ENCODE measurements at regions of chr11 and their contacts with region 1.

Region 1: GRCh38 chr11:71448257-71449171 is at the start of gene DHCR7:
- DNase-seq: peak; percentile 90
- ATAC-seq: peak; percentile 88
- H3K4me3 ChIP-seq: peak within 1 kb of the TSS; percentile 76 to 93 (median 86)
- H3K27ac ChIP-seq: peak within 1 kb of the TSS; percentile 58
- H3K4me1 ChIP-seq: peaks cover 59% of the 10 kb centered on the region
- H3K27me3 ChIP-seq: no peaks in the 10 kb centered on the region
- CTCF ChIP-seq: no peak
- EP300 ChIP-seq: no peak
- POLR2A ChIP-seq: peak in 1 of 2 experiments; percentile 22; a peak in 1 of 4 replicates
- RAD21 ChIP-seq: no peak
- total RNA-seq, gene DHCR7: 40.4 and 96.0 TPM in 2 replicates

Region 2: DNA sequence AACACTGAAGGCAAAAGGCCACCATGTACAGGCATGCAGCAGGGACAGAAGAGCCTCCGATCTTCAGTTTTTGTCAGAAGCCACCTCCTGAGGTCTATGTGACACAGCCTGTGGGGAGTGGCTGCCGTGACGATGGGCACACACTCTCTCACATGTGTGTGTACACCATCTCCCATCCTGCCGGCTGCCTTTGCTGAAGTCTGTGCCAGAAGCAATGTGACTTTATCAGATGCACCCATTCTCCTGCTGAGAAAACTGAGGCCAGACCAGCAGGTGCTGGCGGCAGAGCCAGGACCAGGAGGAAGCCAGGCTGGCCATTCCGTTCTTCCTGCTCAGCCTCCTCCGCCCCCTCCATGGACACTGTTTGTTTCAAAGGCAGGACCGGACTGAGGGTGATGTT is 212.8 kb before region 1 on chr11:
- CTCF ChIA-PET with region 1: no interaction called
- POLR2A ChIA-PET with region 1: no interaction called
- in situ Hi-C with region 1: no loop called
- intact Hi-C with region 1: no loop called
- DNase-seq: no peak
- ATAC-seq: no peak
- H3K4me3 ChIP-seq: no peak overlapping the region
- H3K27ac ChIP-seq: no peak overlapping the region
- H3K4me1 ChIP-seq: peaks cover 34% of the 10 kb centered on the region
- H3K27me3 ChIP-seq: no peaks in the 10 kb centered on the region
- CTCF ChIP-seq: no peak
- EP300 ChIP-seq: no peak
- POLR2A ChIP-seq: no peak
- RAD21 ChIP-seq: no peak

Region 3: GRCh38 chr11:71433648-71434450 is 14.7 kb before region 1 on chr11:
- CTCF ChIA-PET with region 1: no interaction called
- POLR2A ChIA-PET with region 1: interaction called, 16 read pairs
- in situ Hi-C with region 1: no loop called
- intact Hi-C with region 1: no loop called
- DNase-seq: peak; percentile 68
- ATAC-seq: peak; percentile 84
- H3K4me3 ChIP-seq: peak overlapping the region in 1 of 3 experiments; percentile 26; a peak in 2 of 6 replicates
- H3K27ac ChIP-seq: peak overlapping the region; percentile 23
- H3K4me1 ChIP-seq: peaks cover 51% of the 10 kb centered on the region
- H3K27me3 ChIP-seq: no peaks in the 10 kb centered on the region
- CTCF ChIP-seq: no peak
- EP300 ChIP-seq: no peak
- POLR2A ChIP-seq: no peak
- RAD21 ChIP-seq: no peak

Measured in HepG2 (cell line).